T-cell (primary cell): ENCODE measurements at regions of chr16 and their contacts with region 1.

Region 1: GRCh38 chr16:68144008-68144407 is 58.8 kb downstream of the NFATC3 start:
- DNase-seq: no peak
- ATAC-seq: no peak
- H3K4me3 ChIP-seq: no peak overlapping the region
- H3K4me3 Mint-ChIP-seq: no peak overlapping the region
- H3K27ac ChIP-seq: no peak overlapping the region
- H3K27ac Mint-ChIP-seq: peak overlapping the region; percentile 4 to 34
- H3K4me1 ChIP-seq: peaks cover 0 to 6% of the 10 kb centered on the region in 2 experiments
- H3K4me1 Mint-ChIP-seq: peaks cover 56 to 63% (median 58%) of the 10 kb centered on the region in 3 donors
- H3K27me3 ChIP-seq: no peaks in the 10 kb centered on the region
- H3K27me3 Mint-ChIP-seq: no peaks in the 10 kb centered on the region

Region 2: GRCh38 chr16:67959520-67959919 is 184.5 kb before region 1 on chr16:
- CTCF ChIA-PET with region 1: no interaction called
- POLR2A ChIA-PET with region 1: no interaction called
- DNase-seq: no peak
- ATAC-seq: no peak
- H3K4me3 ChIP-seq: no peak overlapping the region
- H3K4me3 Mint-ChIP-seq: no peak overlapping the region
- H3K27ac ChIP-seq: no peak overlapping the region
- H3K27ac Mint-ChIP-seq: no peak overlapping the region
- H3K4me1 ChIP-seq: no peaks in the 10 kb centered on the region
- H3K4me1 Mint-ChIP-seq: peaks cover 0 to 1% (median 0%) of the 10 kb centered on the region in 3 donors
- H3K27me3 ChIP-seq: no peaks in the 10 kb centered on the region
- H3K27me3 Mint-ChIP-seq: no peaks in the 10 kb centered on the region

Region 3: DNA sequence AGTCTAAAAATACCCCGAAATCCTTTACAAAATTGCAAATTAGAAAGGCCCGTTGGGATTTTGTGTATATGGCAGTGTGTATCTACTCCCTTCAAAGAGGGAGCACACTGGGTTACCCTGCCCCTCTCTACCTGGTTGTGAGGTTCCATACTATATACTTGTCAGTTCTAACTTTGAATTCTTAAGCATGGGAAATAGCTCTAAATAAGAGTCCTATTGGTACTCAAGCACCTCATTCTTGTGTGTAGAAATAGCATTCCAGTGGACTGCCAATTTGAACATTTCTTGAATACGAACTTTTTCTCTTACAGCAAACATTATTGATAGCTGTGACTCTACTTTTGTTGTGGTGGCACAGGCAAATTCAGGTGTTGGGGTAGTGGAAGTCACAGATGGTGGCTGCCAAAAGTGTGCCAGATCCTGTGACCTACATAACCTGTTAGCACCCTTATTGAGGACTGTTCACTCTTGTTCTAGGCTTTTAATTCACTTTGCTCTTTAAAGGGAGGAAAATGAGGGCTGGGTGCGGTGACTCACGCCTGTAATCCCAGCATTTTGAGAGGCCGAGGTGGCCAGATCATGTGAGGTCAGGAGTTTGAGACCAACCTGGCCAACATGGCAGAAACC is 75.8 kb after region 1 on chr16:
- CTCF ChIA-PET with region 1: no interaction called
- POLR2A ChIA-PET with region 1: interaction called in 1 of 2 experiments, 10 read pairs
- DNase-seq: no peak
- ATAC-seq: no peak
- H3K4me3 ChIP-seq: no peak overlapping the region
- H3K4me3 Mint-ChIP-seq: no peak overlapping the region
- H3K27ac ChIP-seq: no peak overlapping the region
- H3K27ac Mint-ChIP-seq: peak overlapping the region; percentile 49 to 83
- H3K4me1 ChIP-seq: no peaks in the 10 kb centered on the region
- H3K4me1 Mint-ChIP-seq: peaks cover 19 to 20% (median 19%) of the 10 kb centered on the region in 3 donors
- H3K27me3 ChIP-seq: no peaks in the 10 kb centered on the region
- H3K27me3 Mint-ChIP-seq: no peaks in the 10 kb centered on the region

Region 4: DNA sequence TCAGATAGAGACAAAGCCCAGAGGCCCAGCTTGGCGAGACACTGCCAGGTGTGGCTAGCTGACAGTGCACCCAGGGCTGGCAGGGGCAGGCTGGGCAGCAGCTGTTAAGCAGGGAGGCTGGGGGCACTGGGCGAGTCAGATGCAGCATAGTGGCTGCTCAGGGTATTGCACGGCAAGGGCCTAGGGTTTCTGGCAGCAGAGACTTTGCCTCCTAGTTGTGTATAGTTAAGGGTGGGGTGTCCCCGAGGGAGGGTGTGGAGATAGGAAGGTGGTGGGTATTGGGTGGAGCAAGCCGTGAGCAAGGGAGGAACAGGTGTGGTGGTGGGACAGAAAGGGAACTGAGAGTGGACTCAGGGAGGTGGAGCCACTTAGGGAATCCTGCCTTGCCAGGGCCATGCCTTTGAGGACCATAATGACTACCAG is 238.3 kb after region 1 on chr16:
- CTCF ChIA-PET with region 1: no interaction called
- POLR2A ChIA-PET with region 1: no interaction called
- DNase-seq: peak in 2 of 35 experiments; percentile 25
- ATAC-seq: no peak
- H3K4me3 ChIP-seq: no peak overlapping the region
- H3K4me3 Mint-ChIP-seq: no peak overlapping the region
- H3K27ac ChIP-seq: no peak overlapping the region
- H3K27ac Mint-ChIP-seq: no peak overlapping the region
- H3K4me1 ChIP-seq: peaks cover 7 to 31% of the 10 kb centered on the region in 2 experiments
- H3K4me1 Mint-ChIP-seq: peaks cover 18 to 56% (median 43%) of the 10 kb centered on the region in 3 donors
- H3K27me3 ChIP-seq: no peaks in the 10 kb centered on the region
- H3K27me3 Mint-ChIP-seq: no peaks in the 10 kb centered on the region